ENCODE measurements at regions of chr12 and their contacts with region 1.

Region 1: GRCh38 chr12:79886917-79887519 is 47.9 kb downstream of the PPP1R12A start:
- DNase-seq: no peak
- ATAC-seq: peak; percentile 82
- H3K4me3 Mint-ChIP-seq: no peak overlapping the region
- H3K27ac Mint-ChIP-seq: no peak overlapping the region
- H3K4me1 Mint-ChIP-seq: peaks cover 66% of the 10 kb centered on the region
- H3K27me3 Mint-ChIP-seq: no peaks in the 10 kb centered on the region

Region 2: GRCh38 chr12:78338054-78338785 is 1548.8 kb before region 1 on chr12:
- CTCF ChIA-PET with region 1: no interaction called
- POLR2A ChIA-PET with region 1: no interaction called
- intact Hi-C with region 1: no loop called
- DNase-seq: no peak
- ATAC-seq: no peak
- H3K4me3 Mint-ChIP-seq: no peak overlapping the region
- H3K27ac Mint-ChIP-seq: no peak overlapping the region
- H3K4me1 Mint-ChIP-seq: no peaks in the 10 kb centered on the region
- H3K27me3 Mint-ChIP-seq: no peaks in the 10 kb centered on the region

Region 3: DNA sequence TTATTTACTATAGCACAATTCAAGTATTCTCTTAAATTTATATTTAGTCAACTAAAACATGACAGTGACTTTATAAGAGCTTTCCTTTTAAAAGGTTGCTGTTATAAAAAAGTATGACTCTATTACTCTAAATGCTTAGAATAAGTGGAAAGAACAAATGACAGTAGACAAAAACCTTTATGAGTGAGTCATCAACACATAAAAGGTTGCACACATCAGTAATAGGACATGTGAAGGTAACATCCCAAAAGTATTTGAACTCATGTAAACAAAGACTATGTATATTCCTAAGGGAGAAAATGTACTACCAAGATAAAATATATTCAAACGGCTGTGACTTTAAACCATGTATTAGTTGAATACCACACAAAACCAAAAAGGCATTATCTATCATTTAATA is 295.0 kb before region 1 on chr12:
- CTCF ChIA-PET with region 1: no interaction called
- POLR2A ChIA-PET with region 1: no interaction called
- intact Hi-C with region 1: no loop called
- DNase-seq: no peak
- ATAC-seq: no peak
- H3K4me3 Mint-ChIP-seq: no peak overlapping the region
- H3K27ac Mint-ChIP-seq: no peak overlapping the region
- H3K4me1 Mint-ChIP-seq: no peaks in the 10 kb centered on the region
- H3K27me3 Mint-ChIP-seq: no peaks in the 10 kb centered on the region

Region 4: GRCh38 chr12:79927772-79928474 is 40.9 kb after region 1 on chr12:
- CTCF ChIA-PET with region 1: interaction called, 3 read pairs
- POLR2A ChIA-PET with region 1: no interaction called
- intact Hi-C with region 1: loop called in 1 of 2 experiments (anchors 2 kb)
- DNase-seq: peak; percentile 61
- ATAC-seq: peak; percentile 99
- H3K4me3 Mint-ChIP-seq: no peak overlapping the region
- H3K27ac Mint-ChIP-seq: peak overlapping the region; percentile 61
- H3K4me1 Mint-ChIP-seq: peaks cover 64% of the 10 kb centered on the region
- H3K27me3 Mint-ChIP-seq: no peaks in the 10 kb centered on the region

Region 5: DNA sequence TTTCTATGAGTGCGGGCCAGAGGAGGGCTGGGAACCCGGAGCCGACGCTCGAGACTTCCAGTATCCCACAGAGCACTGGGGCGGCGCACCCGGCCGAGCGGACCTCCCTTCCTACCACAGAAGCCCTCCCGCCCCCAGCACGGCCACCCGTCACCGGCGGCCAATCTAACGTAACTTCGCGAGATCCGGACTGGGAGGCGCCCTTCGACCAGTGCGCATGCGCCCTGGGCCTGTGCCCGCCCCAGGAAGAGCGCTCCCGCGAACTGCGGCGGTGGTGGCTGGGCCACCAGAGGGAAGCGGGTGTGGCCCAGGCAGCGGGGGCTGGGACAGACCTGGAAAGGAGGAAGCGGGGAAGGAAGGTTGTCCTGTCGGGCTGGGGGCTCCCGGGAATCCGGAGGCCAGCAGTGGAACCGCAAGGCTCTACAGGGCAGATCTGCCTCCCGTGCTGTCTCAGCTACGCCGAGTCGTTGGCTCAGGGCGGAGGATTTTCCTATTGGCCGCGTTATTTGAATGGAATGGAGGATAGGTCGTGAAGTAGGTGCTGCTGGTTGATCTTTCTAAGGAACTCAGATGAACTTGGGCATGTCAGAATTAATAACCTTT is 48.1 kb after region 1 on chr12 and contains the start of gene PPP1R12A:
- CTCF ChIA-PET with region 1: interaction called, 8 read pairs
- POLR2A ChIA-PET with region 1: no interaction called
- intact Hi-C with region 1: loop called (anchors 2 kb)
- DNase-seq: peak; percentile 97
- ATAC-seq: peak; percentile 87
- H3K4me3 Mint-ChIP-seq: peak within 1 kb of the TSS; percentile 95
- H3K27ac Mint-ChIP-seq: peak within 1 kb of the TSS; percentile 96
- H3K4me1 Mint-ChIP-seq: peaks cover 32% of the 10 kb centered on the region
- H3K27me3 Mint-ChIP-seq: no peaks in the 10 kb centered on the region
- total RNA-seq, gene PPP1R12A: 72.2 to 134 TPM

Region 6: GRCh38 chr12:81167694-81168093 is 1280.7 kb after region 1 on chr12:
- CTCF ChIA-PET with region 1: no interaction called
- POLR2A ChIA-PET with region 1: no interaction called
- intact Hi-C with region 1: no loop called
- DNase-seq: no peak
- ATAC-seq: no peak
- H3K4me3 Mint-ChIP-seq: no peak overlapping the region
- H3K27ac Mint-ChIP-seq: no peak overlapping the region
- H3K4me1 Mint-ChIP-seq: no peaks in the 10 kb centered on the region
- H3K27me3 Mint-ChIP-seq: no peaks in the 10 kb centered on the region